GM12878 (cell line): ENCODE measurements at regions of chr3 and their contacts with region 1.

Region 1: DNA sequence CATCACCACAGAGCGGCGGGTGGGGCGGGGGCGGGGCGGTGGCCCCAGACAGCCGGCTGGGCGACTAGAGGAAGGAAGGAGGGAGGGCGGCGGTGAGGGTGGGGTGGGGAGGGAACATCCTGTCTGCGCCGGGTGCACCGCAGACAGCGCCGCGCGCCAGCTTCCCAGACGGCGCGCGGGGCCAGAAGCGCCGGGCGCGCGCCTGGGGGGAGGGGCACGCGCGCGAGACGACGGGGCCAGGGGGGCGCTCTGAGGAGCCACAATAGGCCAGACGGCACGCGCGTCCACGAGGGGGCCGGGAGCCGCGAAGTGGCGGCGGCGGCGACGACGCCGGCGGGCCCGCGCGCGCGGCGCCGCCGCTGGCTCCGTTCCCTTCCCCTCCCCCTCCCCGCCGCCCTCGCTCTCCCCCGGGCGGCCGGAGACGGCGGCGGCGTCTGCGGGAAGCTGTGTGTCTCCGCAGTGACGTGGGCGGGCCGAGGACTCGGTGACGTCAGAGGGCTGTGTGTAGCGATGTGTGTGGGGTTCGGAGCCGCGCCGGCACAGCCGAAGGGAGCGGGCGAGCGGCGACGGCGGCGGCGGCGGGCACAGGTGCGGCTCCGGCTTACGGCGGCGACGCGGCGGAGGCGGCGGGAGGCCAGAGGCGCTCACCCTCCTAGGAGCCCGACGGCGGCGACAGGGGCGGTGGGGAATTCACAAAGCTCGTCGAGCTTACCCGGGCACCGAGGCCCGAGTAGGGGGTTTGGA is at the start of gene SKIL:
- DNase-seq: peak; percentile 60
- ATAC-seq: peak; percentile 61
- H3K4me3 ChIP-seq: peak within 1 kb of the TSS; percentile 86
- H3K27ac ChIP-seq: peak within 1 kb of the TSS; percentile 96
- H3K4me1 ChIP-seq: peaks cover 37% of the 10 kb centered on the region
- H3K27me3 ChIP-seq: no peaks in the 10 kb centered on the region
- CTCF ChIP-seq: peak in 2 of 3 experiments; percentile 14 to 15; a peak in 1 of 6 replicates
- EP300 ChIP-seq: peak; percentile 25 to 63; a peak in 3 of 4 replicates
- POLR2A ChIP-seq: peak; percentile 76
- RAD21 ChIP-seq: no peak
- polyA plus RNA-seq, gene SKIL: 2.7 to 5.7 TPM

Region 2: DNA sequence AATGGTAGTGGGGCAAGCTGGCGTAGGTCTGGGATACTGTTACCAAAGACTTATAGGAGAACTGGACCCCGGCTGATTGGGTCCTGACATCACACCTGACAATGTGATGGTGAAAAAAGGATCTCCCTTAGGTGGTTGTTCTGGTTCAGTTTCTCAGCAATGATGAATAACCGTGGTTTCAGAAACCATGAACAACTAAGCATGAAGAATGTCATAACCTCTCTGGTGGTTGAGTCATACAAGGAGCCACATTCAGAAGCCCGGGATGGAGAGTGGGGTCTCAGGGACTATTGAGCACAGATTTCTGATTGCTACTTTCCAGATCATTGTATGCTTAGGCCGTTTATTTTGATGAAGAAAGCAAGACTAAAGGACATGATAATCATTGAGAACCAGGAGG is 302.1 kb before region 1 on chr3:
- CTCF ChIA-PET with region 1: interaction called, 3 read pairs
- POLR2A ChIA-PET with region 1: no interaction called
- RAD21 ChIA-PET with region 1: no interaction called
- SMC1A ChIA-PET with region 1: no interaction called
- in situ Hi-C with region 1: no loop called
- intact Hi-C with region 1: loop called (anchors 5 kb)
- DNase-seq: peak; percentile 63
- ATAC-seq: peak; percentile 73
- H3K4me3 ChIP-seq: peak overlapping the region; percentile 59
- H3K27ac ChIP-seq: peak overlapping the region; percentile 94
- H3K4me1 ChIP-seq: peaks cover 42% of the 10 kb centered on the region
- H3K27me3 ChIP-seq: no peaks in the 10 kb centered on the region
- CTCF ChIP-seq: 0 out of 6 replicates have a peak, but pooled peaks of 1 of the 3 experiments have one; percentile 2
- EP300 ChIP-seq: peak; percentile 35 to 36; a peak in 1 of 4 replicates
- POLR2A ChIP-seq: peak; percentile 24; the same call in 1 of the 2 replicates
- RAD21 ChIP-seq: no peak

Region 3: GRCh38 chr3:170257145-170257544 is 100.2 kb before region 1 on chr3:
- CTCF ChIA-PET with region 1: no interaction called
- POLR2A ChIA-PET with region 1: interaction called, 4 read pairs
- RAD21 ChIA-PET with region 1: interaction called, 5 read pairs
- SMC1A ChIA-PET with region 1: no interaction called
- in situ Hi-C with region 1: no loop called
- intact Hi-C with region 1: loop called (anchors 5 kb)
- DNase-seq: no peak
- ATAC-seq: peak; percentile 80
- H3K4me3 ChIP-seq: no peak overlapping the region; the same call in 1 of the 2 replicates
- H3K27ac ChIP-seq: no peak overlapping the region; the same call in 1 of the 2 replicates
- H3K4me1 ChIP-seq: peaks cover 26% of the 10 kb centered on the region
- H3K27me3 ChIP-seq: no peaks in the 10 kb centered on the region
- CTCF ChIP-seq: no peak
- EP300 ChIP-seq: peak; percentile 48 to 61; a peak in 3 of 4 replicates
- POLR2A ChIP-seq: no peak
- RAD21 ChIP-seq: no peak

Region 4: GRCh38 chr3:170330366-170330765 is 27.0 kb before region 1 on chr3:
- CTCF ChIA-PET with region 1: interaction called, 3 read pairs
- POLR2A ChIA-PET with region 1: no interaction called
- RAD21 ChIA-PET with region 1: no interaction called
- SMC1A ChIA-PET with region 1: interaction called, 9 read pairs
- in situ Hi-C with region 1: no loop called
- intact Hi-C with region 1: loop called (anchors 1 kb)
- DNase-seq: no peak
- ATAC-seq: peak; percentile 44
- H3K4me3 ChIP-seq: no peak overlapping the region
- H3K27ac ChIP-seq: no peak overlapping the region
- H3K4me1 ChIP-seq: 0 out of 2 replicates have a peak, but pooled peaks cover 5% of the 10 kb centered on the region
- H3K27me3 ChIP-seq: no peaks in the 10 kb centered on the region
- CTCF ChIP-seq: no peak
- EP300 ChIP-seq: no peak
- POLR2A ChIP-seq: no peak
- RAD21 ChIP-seq: no peak

Region 5: GRCh38 chr3:171459942-171460724 is 1102.8 kb after region 1 on chr3 and contains the start of gene TNIK:
- CTCF ChIA-PET with region 1: no interaction called
- POLR2A ChIA-PET with region 1: no interaction called
- RAD21 ChIA-PET with region 1: no interaction called
- SMC1A ChIA-PET with region 1: no interaction called
- in situ Hi-C with region 1: no loop called
- intact Hi-C with region 1: loop called (anchors 10 kb)
- DNase-seq: peak; percentile 95
- ATAC-seq: peak; percentile 85
- H3K4me3 ChIP-seq: peak within 1 kb of the TSS; percentile 98
- H3K27ac ChIP-seq: peak within 1 kb of the TSS; percentile 80
- H3K4me1 ChIP-seq: peaks cover 10% of the 10 kb centered on the region
- H3K27me3 ChIP-seq: no peaks in the 10 kb centered on the region
- CTCF ChIP-seq: peak in 2 of 3 experiments; percentile 26 to 44; a peak in 2 of 6 replicates
- EP300 ChIP-seq: peak; percentile 40 to 60; a peak in 2 of 4 replicates
- POLR2A ChIP-seq: peak; percentile 91
- RAD21 ChIP-seq: peak; percentile 23; the same call in 1 of the 2 replicates
- polyA plus RNA-seq, gene TNIK: 13.9 to 15.9 TPM